ENCODE measurements at regions of chr1 and their contacts with region 1.

Region 1: DNA sequence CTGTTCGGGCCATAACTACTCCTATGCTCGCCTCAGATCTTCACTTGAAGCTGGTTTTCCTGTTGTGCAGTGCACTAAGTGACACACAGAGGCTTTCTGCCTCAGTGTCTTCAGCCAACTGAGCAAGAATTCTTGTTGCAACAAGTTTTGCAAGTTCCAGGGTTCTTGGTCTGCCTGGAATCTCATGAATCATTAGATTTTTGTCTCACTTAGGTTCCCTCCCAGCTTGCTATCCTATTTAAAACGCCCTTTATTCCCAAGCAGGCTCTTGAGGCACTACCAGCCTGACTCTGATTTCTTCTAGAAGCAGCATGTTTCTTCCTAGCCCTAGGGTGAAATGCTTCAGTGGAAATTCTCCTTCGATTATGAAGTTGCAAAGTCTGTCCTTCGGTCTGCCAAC is 158.8 kb downstream of the C1orf21 start:
- DNase-seq: peak; percentile 83
- H3K4me3 Mint-ChIP-seq: peak overlapping the region; percentile 39
- H3K27ac Mint-ChIP-seq: peak overlapping the region; percentile 57
- H3K4me1 Mint-ChIP-seq: peaks cover 26% of the 10 kb centered on the region
- H3K27me3 Mint-ChIP-seq: no peaks in the 10 kb centered on the region
- CTCF ChIP-seq: no peak

Region 2: DNA sequence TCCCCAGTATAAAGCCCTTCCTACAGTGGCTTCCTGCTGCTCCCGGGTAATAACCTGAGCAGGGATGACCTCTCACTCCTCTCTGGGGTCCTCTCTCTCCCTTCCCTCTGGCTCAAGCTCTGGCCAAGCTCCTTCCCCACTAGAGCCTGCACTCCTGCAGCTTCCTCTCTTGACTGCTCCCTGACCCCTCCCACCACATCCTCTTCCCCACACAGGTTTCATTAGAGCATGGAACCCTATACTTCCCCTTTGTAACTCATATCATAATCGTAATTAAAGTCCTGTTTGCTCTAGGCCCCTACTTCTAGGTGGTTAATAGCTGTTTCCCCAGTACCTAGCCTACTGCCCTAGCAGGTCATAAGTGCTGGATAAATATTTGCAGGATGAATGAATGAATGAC is 12.5 kb before region 1 on chr1:
- CTCF ChIA-PET with region 1: interaction called, 7 read pairs
- POLR2A ChIA-PET with region 1: interaction called, 11 read pairs
- intact Hi-C with region 1: no loop called
- DNase-seq: no peak
- H3K4me3 Mint-ChIP-seq: no peak overlapping the region
- H3K27ac Mint-ChIP-seq: no peak overlapping the region
- H3K4me1 Mint-ChIP-seq: peaks cover 15% of the 10 kb centered on the region
- H3K27me3 Mint-ChIP-seq: no peaks in the 10 kb centered on the region
- CTCF ChIP-seq: no peak

Region 3: DNA sequence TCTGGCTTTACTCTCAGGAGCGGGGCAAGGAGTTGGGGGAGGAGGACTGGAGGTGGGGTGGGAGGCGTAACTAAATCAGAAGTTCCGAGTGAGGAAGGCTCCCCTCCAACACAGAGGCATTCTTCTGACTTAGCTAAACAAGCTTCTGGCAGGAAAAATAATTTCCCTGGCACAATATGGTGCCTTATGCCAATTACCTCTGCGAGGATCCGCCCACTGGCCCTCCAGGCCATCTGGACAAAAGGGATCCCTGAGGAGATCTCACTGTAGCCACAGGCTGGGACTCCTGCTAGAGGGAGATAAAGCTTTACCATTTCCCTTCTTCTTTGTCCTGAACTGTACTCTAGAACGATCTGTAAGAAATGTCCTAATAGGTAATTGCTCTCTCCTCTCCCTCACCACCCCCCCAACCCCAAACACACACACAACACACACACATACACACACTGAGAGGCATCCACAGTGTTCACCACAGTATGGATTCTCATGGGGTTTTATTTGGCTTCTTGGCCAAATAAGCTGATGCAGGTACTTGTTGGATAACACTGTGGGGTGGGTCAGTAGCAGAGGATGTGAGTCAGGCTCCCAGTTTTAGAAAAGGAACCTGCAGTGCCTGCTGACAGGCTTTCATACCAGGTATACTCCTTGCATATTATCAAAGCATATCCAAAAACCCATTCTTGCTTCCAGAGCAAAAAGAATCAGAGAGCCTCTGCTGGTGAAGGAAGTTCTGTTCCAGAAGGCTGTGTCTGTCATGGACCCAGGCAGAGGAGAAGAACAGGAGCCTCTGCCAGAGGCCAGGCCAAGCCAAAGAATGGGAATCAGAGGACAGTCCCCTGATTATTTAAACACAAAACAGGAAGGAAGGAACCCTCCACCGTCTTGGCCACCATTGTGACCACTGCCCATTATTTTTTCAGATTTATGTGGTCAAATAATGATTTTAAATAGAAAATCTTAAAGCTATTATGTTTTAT is 10.4 kb after region 1 on chr1:
- CTCF ChIA-PET with region 1: no interaction called
- POLR2A ChIA-PET with region 1: interaction called, 45 read pairs
- intact Hi-C with region 1: no loop called
- DNase-seq: peak; percentile 52
- H3K4me3 Mint-ChIP-seq: no peak overlapping the region
- H3K27ac Mint-ChIP-seq: peak overlapping the region; percentile 91
- H3K4me1 Mint-ChIP-seq: peaks cover 41% of the 10 kb centered on the region
- H3K27me3 Mint-ChIP-seq: no peaks in the 10 kb centered on the region
- CTCF ChIP-seq: no peak

Region 4: DNA sequence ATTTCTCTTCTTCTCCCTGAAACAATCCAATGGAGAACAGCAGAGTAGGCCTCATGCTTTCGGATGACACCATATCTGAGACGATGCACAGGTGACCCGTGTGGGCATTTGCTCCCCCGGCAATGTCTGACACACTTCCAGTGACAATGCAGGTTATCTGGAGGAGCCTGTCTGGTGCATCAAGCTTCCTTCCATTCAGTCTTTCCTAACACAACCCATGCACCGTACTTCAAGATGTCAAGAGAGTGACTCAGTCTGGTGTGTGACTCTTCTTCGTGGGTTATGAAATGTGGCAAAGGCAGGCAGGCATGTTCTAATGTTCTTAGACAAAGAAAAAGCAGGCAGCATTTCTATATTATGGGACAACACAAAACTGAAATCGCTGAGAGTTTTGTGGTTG is 50.0 kb after region 1 on chr1:
- CTCF ChIA-PET with region 1: no interaction called
- POLR2A ChIA-PET with region 1: interaction called, 13 read pairs
- intact Hi-C with region 1: no loop called
- DNase-seq: peak; percentile 85
- H3K4me3 Mint-ChIP-seq: no peak overlapping the region
- H3K27ac Mint-ChIP-seq: peak overlapping the region; percentile 3
- H3K4me1 Mint-ChIP-seq: peaks cover 30% of the 10 kb centered on the region
- H3K27me3 Mint-ChIP-seq: no peaks in the 10 kb centered on the region
- CTCF ChIP-seq: no peak

Region 5: DNA sequence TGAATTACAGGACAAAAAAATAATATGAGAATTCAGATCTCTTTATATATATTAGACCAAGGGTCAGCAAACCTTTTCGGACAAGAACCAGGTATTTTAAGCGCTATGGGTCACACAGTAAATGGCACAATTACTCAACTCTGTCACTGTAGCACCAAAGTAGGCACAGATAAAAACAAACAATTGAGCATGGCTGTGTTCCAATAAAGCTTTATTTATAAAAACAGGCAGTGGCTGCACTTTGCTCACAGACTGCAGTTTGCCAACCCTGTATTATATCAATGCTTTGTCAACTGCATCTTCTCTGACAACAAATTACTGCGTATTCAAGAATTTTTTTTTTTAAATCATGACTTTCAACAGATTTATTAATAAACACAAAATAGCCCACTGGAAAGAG is 179.2 kb after region 1 on chr1:
- CTCF ChIA-PET with region 1: no interaction called
- POLR2A ChIA-PET with region 1: no interaction called
- intact Hi-C with region 1: no loop called
- DNase-seq: no peak
- H3K4me3 Mint-ChIP-seq: no peak overlapping the region
- H3K27ac Mint-ChIP-seq: peak overlapping the region; percentile 90
- H3K4me1 Mint-ChIP-seq: peaks cover 4% of the 10 kb centered on the region
- H3K27me3 Mint-ChIP-seq: no peaks in the 10 kb centered on the region
- CTCF ChIP-seq: no peak